PC-3 (cell line): ENCODE measurements at regions of chr5 and their contacts with region 1.

Region 1: DNA sequence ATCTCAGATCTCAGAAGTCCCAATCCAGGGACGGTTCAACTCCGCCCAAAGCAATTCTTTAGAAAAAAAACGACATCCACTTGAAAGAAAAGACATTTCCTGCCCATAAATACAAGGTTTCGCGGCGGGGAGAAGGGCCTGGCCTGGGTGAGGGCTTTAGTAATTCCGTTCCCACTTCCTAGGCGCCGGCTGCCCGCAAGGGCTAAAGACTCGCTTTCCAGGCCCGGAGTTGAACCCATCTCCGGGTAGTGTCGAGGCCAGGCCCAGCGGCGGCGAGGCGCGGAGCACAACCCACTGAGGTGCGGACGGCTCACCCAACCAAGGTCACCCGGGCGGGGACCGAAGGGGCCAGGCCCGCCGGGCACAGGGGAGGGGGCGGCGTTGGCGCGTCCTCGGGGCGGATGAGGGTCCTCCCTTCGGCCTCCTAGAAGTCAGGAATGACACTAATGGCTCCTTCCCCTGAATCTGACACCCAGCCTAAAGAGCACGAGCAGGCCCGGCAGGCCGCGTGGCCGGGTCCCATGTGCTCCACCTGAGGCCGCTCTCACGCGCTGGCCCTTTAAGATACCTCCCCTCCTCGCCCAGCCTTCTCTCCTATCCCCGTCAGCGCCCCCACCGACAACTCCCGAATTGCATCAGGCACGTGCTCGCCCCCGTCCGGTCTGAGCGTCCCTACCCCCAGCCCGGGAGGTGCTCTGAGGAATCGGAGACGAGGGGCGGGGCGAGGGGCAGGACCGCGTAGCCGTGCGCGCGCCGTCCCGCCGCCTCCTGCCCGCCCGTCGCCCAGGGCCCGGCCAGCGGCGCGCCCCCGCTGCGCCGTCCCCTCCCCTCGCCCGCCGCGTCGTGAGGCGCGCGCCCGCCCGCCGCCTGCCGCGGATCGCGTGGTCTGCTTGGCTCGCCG is 467 bp upstream of the LARP1 start:
- DNase-seq: peak; percentile 96
- ATAC-seq: peak; percentile 86
- H3K4me3 ChIP-seq: peak overlapping the region; percentile 96
- H3K27ac ChIP-seq: peak overlapping the region; percentile 84
- H3K4me1 ChIP-seq: peaks cover 27% of the 10 kb centered on the region
- H3K27me3 ChIP-seq: no peaks in the 10 kb centered on the region
- CTCF ChIP-seq: peak; percentile 27; the same call in 1 of the 2 replicates

Region 2: DNA sequence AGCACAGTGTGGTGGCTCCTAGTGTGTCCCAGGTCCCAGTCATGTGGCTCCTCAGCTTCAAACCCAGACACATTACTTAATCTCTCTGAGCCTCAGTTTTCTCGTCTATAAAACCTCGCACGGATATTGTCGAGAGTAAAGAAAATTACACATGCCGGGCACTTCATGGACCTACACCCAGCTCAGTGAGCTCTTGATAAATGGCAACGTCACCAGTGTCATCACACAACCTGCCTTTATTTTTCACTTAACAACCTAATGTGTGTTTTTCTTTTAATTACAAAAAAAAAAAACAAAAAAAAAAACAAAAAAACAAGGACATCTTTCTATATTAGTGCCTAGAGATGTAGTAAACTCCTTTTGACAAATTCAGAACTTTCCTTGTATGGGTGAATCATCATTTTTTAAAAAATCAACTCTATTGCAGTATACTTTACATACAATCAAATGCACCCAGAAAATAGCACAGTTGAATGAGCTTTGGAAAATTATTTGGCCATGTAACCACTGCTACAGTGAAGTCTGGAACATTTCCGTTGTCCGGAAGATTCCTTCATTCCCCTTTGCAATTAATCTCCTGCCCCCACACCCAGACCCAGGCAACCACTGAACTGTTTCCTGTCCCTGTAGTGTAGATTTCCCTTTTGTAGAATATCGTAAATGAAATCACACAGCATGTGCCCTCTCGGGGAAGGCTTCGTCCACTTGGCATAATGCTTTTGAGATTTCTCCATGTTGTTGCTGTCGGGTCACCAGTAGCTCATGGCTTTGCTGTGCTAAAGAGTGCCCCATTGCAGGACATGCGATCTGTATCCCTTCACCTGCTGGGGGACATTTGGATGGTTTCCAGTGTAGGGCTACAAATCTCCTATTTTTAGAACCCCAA is 100.0 kb before region 1 on chr5:
- CTCF ChIA-PET with region 1: no interaction called
- POLR2A ChIA-PET with region 1: interaction called, 3 read pairs
- intact Hi-C with region 1: loop called (anchors 10 kb)
- DNase-seq: no peak
- ATAC-seq: no peak
- H3K4me3 ChIP-seq: no peak overlapping the region
- H3K27ac ChIP-seq: no peak overlapping the region
- H3K4me1 ChIP-seq: no peaks in the 10 kb centered on the region
- H3K27me3 ChIP-seq: no peaks in the 10 kb centered on the region
- CTCF ChIP-seq: no peak

Region 3: GRCh38 chr5:154683101-154683880 is 71.4 kb before region 1 on chr5:
- CTCF ChIA-PET with region 1: no interaction called
- POLR2A ChIA-PET with region 1: no interaction called
- intact Hi-C with region 1: loop called (anchors 1 kb)
- DNase-seq: no peak
- ATAC-seq: peak; percentile 10
- H3K4me3 ChIP-seq: peak overlapping the region; percentile 66; the same call in 1 of the 2 replicates
- H3K27ac ChIP-seq: no peak overlapping the region
- H3K4me1 ChIP-seq: peaks cover 3% of the 10 kb centered on the region; the same call in 1 of the 2 replicates
- H3K27me3 ChIP-seq: no peaks in the 10 kb centered on the region
- CTCF ChIP-seq: no peak

Region 4: DNA sequence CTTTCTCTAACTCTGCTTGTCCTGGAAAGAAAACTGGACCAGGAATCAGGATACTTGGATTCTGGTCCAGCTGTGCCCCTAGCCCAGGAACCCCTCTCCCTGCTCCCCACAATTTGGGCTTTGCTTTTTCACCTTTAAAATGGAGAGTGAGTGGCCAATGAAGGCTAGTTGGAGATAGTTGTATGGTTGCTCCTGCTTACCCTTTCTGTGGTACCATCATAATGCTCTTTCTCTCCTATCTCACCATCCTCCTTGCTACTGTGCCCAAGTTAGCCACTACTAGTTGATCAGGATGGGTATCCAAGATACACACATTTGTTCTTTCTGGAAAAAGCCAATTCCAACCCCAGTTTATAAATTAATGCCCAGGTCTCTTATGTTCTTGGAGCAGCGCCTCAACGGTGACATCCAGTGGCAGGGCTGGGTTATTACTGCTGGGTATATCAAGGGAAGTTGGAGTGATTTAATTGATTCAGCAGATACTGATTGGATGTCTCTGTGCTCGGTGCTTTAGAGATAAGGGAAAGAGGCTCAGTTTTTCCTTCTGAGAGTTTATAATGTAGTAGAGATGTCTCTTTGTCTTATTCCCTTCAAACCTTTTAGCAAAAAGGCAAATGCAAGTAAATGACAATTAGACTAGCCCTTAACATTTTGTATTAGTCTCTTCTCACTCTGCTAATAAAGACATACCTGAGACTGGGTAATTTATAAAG is 57.1 kb after region 1 on chr5:
- CTCF ChIA-PET with region 1: no interaction called
- POLR2A ChIA-PET with region 1: no interaction called
- intact Hi-C with region 1: loop called (anchors 5 kb)
- DNase-seq: peak; percentile 52
- ATAC-seq: peak; percentile 72
- H3K4me3 ChIP-seq: no peak overlapping the region
- H3K27ac ChIP-seq: no peak overlapping the region
- H3K4me1 ChIP-seq: no peaks in the 10 kb centered on the region
- H3K27me3 ChIP-seq: no peaks in the 10 kb centered on the region
- CTCF ChIP-seq: peak; percentile 87

Region 5: DNA sequence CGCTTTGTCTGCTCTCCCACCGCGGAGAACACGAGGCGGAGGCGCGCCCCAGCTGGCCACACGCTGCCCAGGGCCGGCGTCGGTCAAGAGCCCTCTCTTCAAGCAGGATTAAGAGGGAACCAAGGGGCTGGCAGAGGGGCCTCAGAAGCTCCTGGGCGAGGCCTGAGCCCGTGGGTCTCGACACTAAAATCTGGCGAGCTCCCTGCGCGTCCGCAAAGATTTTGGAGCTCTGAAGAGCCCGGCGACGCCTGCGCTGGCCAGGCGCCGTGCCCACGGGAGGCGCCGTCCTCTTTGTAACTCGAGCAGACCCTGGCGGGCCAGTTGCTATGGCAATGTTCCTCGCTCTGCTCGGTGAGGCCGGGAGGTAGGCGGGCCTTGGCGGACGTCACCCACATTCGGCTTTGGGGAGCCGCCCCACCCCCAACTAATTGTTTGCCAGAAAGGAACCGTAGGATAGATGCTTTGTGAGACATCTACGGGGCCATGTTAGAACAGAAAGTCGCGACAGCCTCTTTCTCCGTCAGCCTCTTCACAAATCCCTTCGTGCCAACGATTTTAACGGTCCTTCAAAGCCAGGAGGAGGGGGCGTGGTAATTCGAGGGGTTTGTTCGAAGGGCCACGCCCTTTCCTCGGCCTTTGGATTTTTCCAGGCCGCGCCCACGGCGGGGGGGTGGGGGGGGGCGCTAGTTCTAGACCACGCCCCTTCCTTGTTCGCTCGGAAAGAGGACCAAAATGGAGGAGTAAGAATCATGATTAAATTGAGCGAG is 103.0 kb after region 1 on chr5:
- CTCF ChIA-PET with region 1: no interaction called
- POLR2A ChIA-PET with region 1: no interaction called
- intact Hi-C with region 1: loop called (anchors 1 kb)
- DNase-seq: peak; percentile 88
- ATAC-seq: peak; percentile 86
- H3K4me3 ChIP-seq: peak overlapping the region; percentile 93
- H3K27ac ChIP-seq: peak overlapping the region; percentile 88
- H3K4me1 ChIP-seq: peaks cover 11% of the 10 kb centered on the region; the same call in 1 of the 2 replicates
- H3K27me3 ChIP-seq: no peaks in the 10 kb centered on the region
- CTCF ChIP-seq: no peak